GM23248 (cell line): ENCODE measurements at regions of chr12 and their contacts with region 1.

Region 1: GRCh38 chr12:121673003-121673511 is 3.6 kb upstream of the MORN3 start:
- DNase-seq: peak; percentile 34
- H3K4me3 ChIP-seq: peak overlapping the region; percentile 75
- H3K27ac ChIP-seq: no peak overlapping the region
- H3K4me1 ChIP-seq: peaks cover 8% of the 10 kb centered on the region; the same call in 1 of the 2 replicates
- H3K27me3 ChIP-seq: no peaks in the 10 kb centered on the region

Region 2: DNA sequence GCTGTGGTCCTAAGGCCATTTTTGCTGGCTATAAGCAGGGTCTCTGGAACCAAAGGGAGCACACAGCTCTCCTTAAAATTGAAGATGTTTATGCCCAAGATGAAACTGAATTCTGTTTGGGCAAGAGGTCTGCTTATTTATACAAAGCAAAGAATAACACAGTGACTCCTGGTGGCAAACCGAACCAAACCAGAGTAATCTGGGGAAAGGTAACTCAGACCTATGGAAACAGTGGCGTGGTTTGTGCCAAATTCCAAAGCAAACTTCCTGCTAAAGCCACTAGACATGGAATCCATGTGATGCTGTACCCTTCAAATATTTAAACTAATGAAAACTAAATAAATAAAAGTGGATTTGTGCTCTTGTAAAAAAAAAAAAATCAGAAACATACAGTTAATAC is 1713.6 kb before region 1 on chr12:
- in situ Hi-C with region 1: no loop called
- DNase-seq: no peak
- H3K4me3 ChIP-seq: no peak overlapping the region
- H3K27ac ChIP-seq: no peak overlapping the region
- H3K4me1 ChIP-seq: no peaks in the 10 kb centered on the region
- H3K27me3 ChIP-seq: peaks cover 3% of the 10 kb centered on the region; the same call in 1 of the 2 replicates

Region 3: DNA sequence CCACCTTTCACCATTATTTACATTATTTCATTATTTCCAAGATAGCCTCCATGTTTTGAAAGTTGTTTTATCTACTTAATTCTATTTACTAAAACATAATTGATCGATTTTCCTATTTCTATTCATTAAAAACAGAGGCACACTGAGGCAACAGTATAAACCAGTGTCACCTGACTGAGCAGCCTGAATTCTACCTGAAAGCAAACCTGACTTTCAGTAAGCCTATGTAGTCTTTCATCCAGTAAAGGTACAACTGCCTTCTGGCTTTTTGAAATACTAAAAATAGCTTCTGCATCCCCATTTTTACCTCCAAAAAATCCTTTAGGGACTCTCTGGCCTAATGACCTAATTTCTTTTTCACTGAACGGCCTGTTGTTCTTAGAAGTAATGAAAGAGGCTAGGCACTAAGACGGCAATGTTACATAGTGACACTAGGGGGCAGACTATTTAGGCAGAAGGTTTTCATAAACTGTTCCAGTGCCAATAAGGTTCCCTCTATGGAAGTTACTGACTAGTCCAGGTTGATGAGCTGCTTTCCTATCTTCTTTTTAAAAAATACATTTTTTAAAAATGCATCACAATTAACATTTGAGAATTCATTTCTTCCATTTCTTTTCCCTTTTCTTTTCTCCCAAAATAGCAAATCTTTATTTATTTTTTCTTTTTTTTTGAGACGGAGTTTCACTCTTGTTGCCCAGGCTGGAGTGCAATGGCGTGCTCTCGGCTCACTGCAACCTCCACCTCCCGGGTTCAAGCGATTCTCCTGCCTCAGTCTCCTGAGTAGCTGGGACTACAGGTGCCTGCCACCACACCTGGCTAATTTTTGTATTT is 338.3 kb before region 1 on chr12:
- in situ Hi-C with region 1: loop called (anchors 10 kb)
- DNase-seq: peak; percentile 85
- H3K4me3 ChIP-seq: no peak overlapping the region
- H3K27ac ChIP-seq: no peak overlapping the region
- H3K4me1 ChIP-seq: no peaks in the 10 kb centered on the region
- H3K27me3 ChIP-seq: no peaks in the 10 kb centered on the region

Region 4: DNA sequence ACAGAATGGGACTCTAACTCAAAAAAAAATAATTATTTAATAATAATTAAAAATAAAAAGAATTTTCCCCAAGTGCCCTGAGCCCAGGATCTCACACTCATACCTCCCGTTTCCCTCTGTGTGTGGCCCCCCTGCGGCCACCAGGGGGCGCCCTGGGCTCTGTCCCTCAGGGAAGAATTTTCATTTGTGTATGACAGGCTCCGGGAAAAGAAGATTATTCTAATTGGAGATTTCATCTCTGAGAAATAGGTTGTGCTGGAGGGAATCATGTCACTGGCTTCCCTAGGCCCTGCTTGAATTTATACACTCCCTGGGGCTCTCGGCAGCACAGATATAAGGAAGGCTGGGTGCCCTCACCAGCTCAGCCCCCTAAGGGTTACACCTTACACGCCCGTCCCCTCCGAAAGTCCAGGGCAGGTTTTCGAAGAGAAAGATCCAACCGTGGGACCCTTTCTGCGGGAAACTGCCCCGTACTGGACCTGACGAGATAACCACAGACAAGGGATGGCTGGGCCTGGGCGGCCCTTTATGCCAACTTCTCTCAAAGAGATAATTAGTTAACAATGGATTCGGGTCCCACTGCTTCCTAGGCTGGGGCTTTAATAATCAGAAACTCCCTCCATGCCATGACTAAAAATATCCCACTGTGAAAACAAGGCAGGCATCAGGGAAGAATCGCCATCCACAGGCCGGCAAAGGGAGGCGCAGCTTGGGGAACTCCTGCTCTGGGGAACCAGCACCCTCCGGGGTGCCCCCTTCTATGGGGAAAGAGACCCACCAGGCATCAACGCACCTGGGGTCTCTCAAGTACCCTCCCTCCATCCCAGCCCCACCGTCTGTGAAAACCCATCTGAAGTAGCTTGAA is 172.9 kb before region 1 on chr12:
- in situ Hi-C with region 1: loop called (anchors 10 kb)
- DNase-seq: peak; percentile 72
- H3K4me3 ChIP-seq: no peak overlapping the region
- H3K27ac ChIP-seq: no peak overlapping the region
- H3K4me1 ChIP-seq: no peaks in the 10 kb centered on the region
- H3K27me3 ChIP-seq: no peaks in the 10 kb centered on the region

Region 5: GRCh38 chr12:121550974-121551634 is 122.0 kb before region 1 on chr12:
- in situ Hi-C with region 1: loop called (anchors 10 kb)
- DNase-seq: no peak
- H3K4me3 ChIP-seq: no peak overlapping the region
- H3K27ac ChIP-seq: no peak overlapping the region
- H3K4me1 ChIP-seq: no peaks in the 10 kb centered on the region
- H3K27me3 ChIP-seq: no peaks in the 10 kb centered on the region